ENCODE measurements at regions of chr4 and their contacts with region 1.

Region 1: DNA sequence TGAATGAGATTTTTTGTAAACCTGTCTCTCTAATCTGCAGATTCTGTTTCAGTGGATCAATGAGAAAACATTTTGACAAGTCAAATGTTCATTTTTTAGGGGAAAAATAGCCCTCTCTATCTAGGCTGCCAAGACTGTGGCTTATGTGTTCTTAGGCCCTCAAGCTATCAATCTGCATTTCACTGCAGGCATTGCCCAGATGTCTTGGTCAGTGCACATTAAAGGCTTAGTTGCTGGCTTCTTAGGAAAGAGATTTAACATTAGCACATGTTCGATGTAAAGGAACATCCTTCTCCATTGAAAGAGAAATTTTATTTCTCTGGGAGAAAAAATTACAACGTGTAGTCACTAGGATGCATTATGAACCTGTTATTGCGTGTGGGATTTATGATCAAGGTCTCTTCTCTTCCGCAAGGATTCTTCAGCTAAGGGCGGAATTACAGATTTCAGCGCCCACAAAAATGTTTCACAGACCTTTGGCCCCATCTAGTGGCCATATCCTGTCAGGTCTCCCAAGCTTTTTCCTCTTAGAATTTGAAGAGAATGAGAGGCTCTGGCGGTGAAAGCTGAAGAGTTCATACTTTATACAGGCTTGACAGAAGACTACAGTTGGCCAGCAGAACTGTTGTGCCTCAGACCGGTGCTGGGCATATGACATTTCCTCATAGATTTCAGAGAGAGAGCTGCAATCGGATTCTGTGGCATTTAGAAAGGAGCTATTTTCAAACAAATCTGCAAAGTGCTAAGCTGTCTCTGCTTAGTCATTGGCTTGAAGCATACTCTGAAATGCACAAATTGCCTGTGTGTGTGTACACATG is 144.6 kb upstream of the NOCT start:
- DNase-seq: peak; percentile 70
- H3K4me3 ChIP-seq: no peak overlapping the region; a peak in 1 of 4 replicates
- H3K27ac ChIP-seq: peak overlapping the region in 1 of 2 experiments; percentile 23; a peak in 1 of 4 replicates
- H3K4me1 ChIP-seq: peaks cover 0 to 7% of the 10 kb centered on the region in 2 experiments; a peak in 2 of 4 replicates
- H3K27me3 ChIP-seq: no peaks in the 10 kb centered on the region
- CTCF ChIP-seq: peak; percentile 87
- EP300 ChIP-seq: no peak; a peak in 1 of 4 replicates
- RAD21 ChIP-seq: peak; percentile 97

Region 2: GRCh38 chr4:138090150-138090917 is 780.6 kb before region 1 on chr4:
- CTCF ChIA-PET with region 1: interaction called, 17 read pairs
- POLR2A ChIA-PET with region 1: no interaction called
- DNase-seq: peak; percentile 78
- H3K4me3 ChIP-seq: peak overlapping the region; percentile 34 to 40
- H3K27ac ChIP-seq: no peak overlapping the region
- H3K4me1 ChIP-seq: no peaks in the 10 kb centered on the region; a peak in 2 of 4 replicates
- H3K27me3 ChIP-seq: no peaks in the 10 kb centered on the region
- CTCF ChIP-seq: peak; percentile 81
- EP300 ChIP-seq: 0 out of 4 replicates have a peak, but pooled peaks of 1 of the 2 experiments have one; percentile 22
- RAD21 ChIP-seq: peak; percentile 89

Region 3: DNA sequence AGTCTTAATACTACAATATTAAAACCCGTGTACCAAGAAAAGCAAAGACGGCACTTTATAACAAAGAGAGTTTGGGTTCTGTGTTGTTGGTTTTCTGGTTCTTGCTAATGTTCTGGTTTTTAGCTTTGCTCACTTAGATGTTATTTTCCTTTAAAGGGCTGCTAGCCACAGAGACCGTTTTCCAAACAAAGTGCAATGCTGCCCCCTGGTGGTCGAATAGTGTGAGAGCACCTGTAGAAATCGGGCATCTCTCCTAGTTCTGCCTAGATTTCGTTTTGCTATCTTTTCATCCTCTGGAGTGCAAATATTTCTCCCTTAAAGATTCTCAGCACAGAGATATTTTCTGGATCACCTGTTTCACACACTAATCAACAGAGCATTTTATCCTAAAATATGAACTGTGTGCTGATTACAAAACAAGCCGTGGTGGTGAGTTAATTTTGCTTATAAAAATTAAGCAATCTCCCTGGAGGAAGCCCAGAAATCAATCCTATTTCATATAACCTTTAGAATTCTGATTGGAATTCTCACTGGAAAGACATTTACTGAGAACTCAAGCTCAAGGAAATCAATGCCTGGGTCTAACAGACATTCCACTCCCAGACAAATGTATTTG is 189.8 kb before region 1 on chr4:
- CTCF ChIA-PET with region 1: interaction called, 25 read pairs
- POLR2A ChIA-PET with region 1: no interaction called
- DNase-seq: peak; percentile 62
- H3K4me3 ChIP-seq: no peak overlapping the region
- H3K27ac ChIP-seq: no peak overlapping the region
- H3K4me1 ChIP-seq: peaks cover 0 to 10% of the 10 kb centered on the region in 2 experiments; a peak in 2 of 4 replicates
- H3K27me3 ChIP-seq: no peaks in the 10 kb centered on the region
- CTCF ChIP-seq: peak; percentile 94
- EP300 ChIP-seq: no peak
- RAD21 ChIP-seq: peak; percentile 99

Region 4: DNA sequence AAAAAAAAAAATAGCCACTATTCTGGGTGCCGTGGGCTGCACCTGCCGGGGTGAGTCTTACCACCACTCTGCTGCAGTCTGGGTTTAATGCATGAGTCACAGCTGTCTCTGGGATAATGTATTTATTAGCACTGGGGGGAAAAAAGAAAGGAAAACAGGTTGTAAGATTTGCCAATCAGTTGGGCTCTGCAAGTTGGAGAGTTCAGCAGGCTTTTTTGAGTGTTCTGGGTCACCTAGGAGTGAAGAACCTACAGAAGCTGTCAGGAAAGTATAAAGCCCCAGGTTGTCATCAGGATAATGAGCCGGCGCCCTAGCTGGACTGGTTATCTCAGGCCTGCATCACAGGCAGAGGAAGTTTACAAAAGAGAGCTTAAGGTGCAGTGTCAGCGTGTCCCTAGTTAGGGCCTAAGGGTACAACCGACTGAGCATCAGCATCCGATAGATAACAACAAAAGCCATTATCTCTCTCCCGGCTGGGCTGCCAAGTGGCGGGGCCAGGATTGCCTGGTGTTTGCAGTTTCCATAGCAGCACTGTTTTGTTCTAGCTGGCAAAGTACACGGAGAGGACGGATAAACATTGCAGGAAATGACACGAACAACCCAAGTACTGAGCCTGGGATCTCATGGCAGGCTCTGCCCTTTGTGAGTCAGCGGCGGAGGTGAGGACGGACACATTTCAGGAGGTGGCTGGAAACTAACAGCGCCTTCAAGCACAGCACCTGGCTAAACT is 39.8 kb after region 1 on chr4:
- CTCF ChIA-PET with region 1: interaction called, 40 read pairs
- POLR2A ChIA-PET with region 1: interaction called, 5 read pairs
- DNase-seq: peak; percentile 75
- H3K4me3 ChIP-seq: peak overlapping the region; percentile 2 to 35; a peak in 1 of 4 replicates
- H3K27ac ChIP-seq: peak overlapping the region; percentile 50 to 99
- H3K4me1 ChIP-seq: peaks cover 5 to 51% of the 10 kb centered on the region in 2 experiments; a peak in 3 of 4 replicates
- H3K27me3 ChIP-seq: no peaks in the 10 kb centered on the region
- CTCF ChIP-seq: no peak
- EP300 ChIP-seq: peak in 1 of 2 experiments; percentile 96; a peak in 2 of 4 replicates
- RAD21 ChIP-seq: peak; percentile 16; the same call in 1 of the 2 replicates

Region 5: GRCh38 chr4:138938366-138938690 is 67.4 kb after region 1 on chr4:
- CTCF ChIA-PET with region 1: interaction called, 23 read pairs
- POLR2A ChIA-PET with region 1: no interaction called
- DNase-seq: peak; percentile 42
- H3K4me3 ChIP-seq: no peak overlapping the region
- H3K27ac ChIP-seq: no peak overlapping the region
- H3K4me1 ChIP-seq: peaks cover 0 to 2% of the 10 kb centered on the region in 2 experiments; a peak in 1 of 4 replicates
- H3K27me3 ChIP-seq: no peaks in the 10 kb centered on the region
- CTCF ChIP-seq: peak; percentile 65
- EP300 ChIP-seq: no peak
- RAD21 ChIP-seq: peak; percentile 87

Region 6: GRCh38 chr4:139030614-139031235 is 159.8 kb after region 1 on chr4:
- CTCF ChIA-PET with region 1: no interaction called
- POLR2A ChIA-PET with region 1: no interaction called
- DNase-seq: peak; percentile 67
- H3K4me3 ChIP-seq: no peak overlapping the region
- H3K27ac ChIP-seq: no peak overlapping the region; a peak in 1 of 4 replicates
- H3K4me1 ChIP-seq: peaks cover 0 to 6% of the 10 kb centered on the region in 2 experiments; a peak in 1 of 4 replicates
- H3K27me3 ChIP-seq: no peaks in the 10 kb centered on the region
- CTCF ChIP-seq: peak; percentile 88
- EP300 ChIP-seq: no peak
- RAD21 ChIP-seq: peak; percentile 96